Activated CD4-positive, alpha-beta memory T cell treated with anti-CD3 and anti-CD28 coated beads, Interleukin-2, amount 10 ng/mL, durations not matched to agents 7 days and 5 days (primary cell): ENCODE measurements at regions of chr17 and their contacts with region 1.

Region 1: GRCh38 chr17:31216053-31216751 is 80.8 kb downstream of the OMG start:
- DNase-seq: no peak
- H3K4me3 Mint-ChIP-seq: no peak overlapping the region
- H3K27ac Mint-ChIP-seq: no peak overlapping the region
- H3K4me1 Mint-ChIP-seq: no peaks in the 10 kb centered on the region
- H3K27me3 Mint-ChIP-seq: no peaks in the 10 kb centered on the region

Region 2: GRCh38 chr17:31373150-31374093 is 157.2 kb after region 1 on chr17:
- CTCF ChIA-PET with region 1: interaction called, 14 read pairs
- POLR2A ChIA-PET with region 1: no interaction called
- DNase-seq: no peak
- H3K4me3 Mint-ChIP-seq: no peak overlapping the region
- H3K27ac Mint-ChIP-seq: no peak overlapping the region
- H3K4me1 Mint-ChIP-seq: peaks cover 17% of the 10 kb centered on the region
- H3K27me3 Mint-ChIP-seq: no peaks in the 10 kb centered on the region